ENCODE measurements at regions of chr7 and their contacts with region 1.

Region 1: DNA sequence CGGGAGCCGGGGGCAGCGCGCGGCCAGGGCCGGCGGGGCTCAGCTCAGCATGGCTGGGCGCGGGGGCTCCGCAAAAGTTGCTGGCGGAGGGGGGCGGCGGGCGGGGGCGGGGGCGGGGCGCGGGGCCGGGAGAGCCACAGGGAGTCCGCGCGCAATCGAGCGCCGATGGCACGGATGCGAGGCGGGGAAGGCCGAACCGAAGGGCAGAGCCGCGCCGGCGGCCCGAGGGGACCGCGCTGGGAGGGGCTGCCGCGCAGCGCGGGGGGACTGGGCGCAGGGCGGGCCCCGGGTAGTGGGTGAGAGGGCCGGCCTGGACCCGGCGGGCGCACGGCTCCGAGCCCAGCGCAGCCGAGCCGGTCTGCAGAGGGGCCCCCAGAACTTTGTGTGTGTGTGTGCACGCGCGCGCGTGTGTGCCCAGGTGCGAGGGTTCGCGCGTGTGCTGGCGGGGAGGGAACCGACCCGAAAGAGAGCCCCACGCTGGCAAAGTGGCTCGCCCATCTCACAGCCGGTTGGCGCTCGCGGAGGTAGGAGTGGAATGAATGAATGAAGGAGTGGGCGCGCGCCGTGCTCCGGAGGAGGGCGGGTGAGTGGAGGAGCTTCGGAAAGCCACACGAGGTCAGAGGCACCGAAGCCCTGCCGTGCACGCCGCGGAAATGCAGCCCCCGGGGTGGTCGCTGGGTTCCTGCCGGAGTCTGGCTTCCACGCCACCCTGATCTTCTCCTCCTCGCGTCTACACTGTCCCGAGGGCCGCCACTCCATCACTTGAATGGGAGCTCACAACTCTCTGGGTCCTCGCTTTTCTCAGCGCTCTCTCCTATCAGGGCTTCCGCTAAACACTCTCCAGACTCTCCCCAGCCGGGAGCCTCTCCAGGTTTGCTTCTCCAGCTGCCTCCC is at the start of gene HIPK2:
- DNase-seq: peak; percentile 63 to 81
- ATAC-seq: peak; percentile 68 to 80 (median 74)
- H3K4me3 ChIP-seq: peak within 1 kb of the TSS; percentile 78
- H3K4me3 Mint-ChIP-seq: peak within 1 kb of the TSS; percentile 98
- H3K27ac ChIP-seq: peak within 1 kb of the TSS; percentile 75
- H3K27ac Mint-ChIP-seq: peak within 1 kb of the TSS; percentile 95 to 99
- H3K4me1 ChIP-seq: peaks cover 21% of the 10 kb centered on the region
- H3K4me1 Mint-ChIP-seq: peaks cover 57 to 59% of the 10 kb centered on the region in 2 donors
- H3K27me3 ChIP-seq: peaks cover 4% of the 10 kb centered on the region
- H3K27me3 Mint-ChIP-seq: no peaks in the 10 kb centered on the region
- CTCF ChIP-seq: no peak
- total RNA-seq, gene HIPK2: 127 to 145 (median 144) TPM

Region 2: GRCh38 chr7:139823959-139824521 is 45.8 kb after region 1 on chr7:
- intact Hi-C with region 1: loop called (anchors 1 kb)
- DNase-seq: no peak
- ATAC-seq: no peak
- H3K4me3 ChIP-seq: no peak overlapping the region
- H3K4me3 Mint-ChIP-seq: no peak overlapping the region
- H3K27ac ChIP-seq: no peak overlapping the region
- H3K27ac Mint-ChIP-seq: no peak overlapping the region
- H3K4me1 ChIP-seq: peaks cover 30% of the 10 kb centered on the region
- H3K4me1 Mint-ChIP-seq: peaks cover 11 to 22% of the 10 kb centered on the region in 2 donors
- H3K27me3 ChIP-seq: no peaks in the 10 kb centered on the region
- H3K27me3 Mint-ChIP-seq: no peaks in the 10 kb centered on the region
- CTCF ChIP-seq: no peak

Region 3: DNA sequence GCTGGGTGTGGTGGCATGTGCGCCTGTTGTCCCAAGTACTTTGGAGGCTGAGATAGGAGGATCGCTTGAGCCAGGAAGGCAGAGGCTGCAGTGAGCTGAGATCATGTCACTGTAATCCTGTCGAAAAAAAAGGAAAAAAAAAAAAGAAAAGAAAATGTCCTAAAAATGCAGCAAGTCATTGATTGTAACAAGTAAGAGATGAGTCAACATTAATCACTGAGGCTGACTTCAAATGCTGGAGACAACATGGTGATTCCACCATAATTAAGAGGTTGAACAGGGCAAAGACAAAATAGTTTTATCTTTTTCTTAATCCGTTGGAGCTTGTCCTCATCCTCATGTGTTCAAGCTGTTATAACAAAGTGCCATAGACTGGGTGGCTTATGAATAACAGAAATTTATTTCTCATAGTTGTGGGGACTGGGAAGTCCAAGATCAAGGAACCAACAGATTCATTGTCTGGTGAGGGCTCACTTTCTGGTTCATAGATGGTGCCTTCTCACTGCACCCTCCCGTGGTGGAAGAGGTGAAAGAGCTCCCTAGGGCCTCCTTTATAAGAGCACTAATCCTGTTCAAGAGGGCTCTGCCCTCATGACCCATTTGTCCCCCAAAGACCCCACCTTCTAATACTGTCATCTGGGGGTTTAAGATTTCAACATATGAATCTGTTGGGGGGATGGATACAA is 111.1 kb after region 1 on chr7:
- intact Hi-C with region 1: loop called (anchors 5 kb)
- DNase-seq: no peak
- ATAC-seq: no peak
- H3K4me3 ChIP-seq: no peak overlapping the region
- H3K4me3 Mint-ChIP-seq: no peak overlapping the region
- H3K27ac ChIP-seq: no peak overlapping the region
- H3K27ac Mint-ChIP-seq: peak overlapping the region; percentile 92 to 94
- H3K4me1 ChIP-seq: peaks cover 22% of the 10 kb centered on the region
- H3K4me1 Mint-ChIP-seq: peaks cover 57 to 60% of the 10 kb centered on the region in 2 donors
- H3K27me3 ChIP-seq: no peaks in the 10 kb centered on the region
- H3K27me3 Mint-ChIP-seq: no peaks in the 10 kb centered on the region
- CTCF ChIP-seq: no peak

Region 4: GRCh38 chr7:139981511-139981895 is 203.3 kb after region 1 on chr7:
- intact Hi-C with region 1: loop called (anchors 2 kb)
- DNase-seq: no peak
- ATAC-seq: no peak
- H3K4me3 ChIP-seq: no peak overlapping the region
- H3K4me3 Mint-ChIP-seq: peak overlapping the region; percentile 25
- H3K27ac ChIP-seq: no peak overlapping the region
- H3K27ac Mint-ChIP-seq: peak overlapping the region; percentile 89 to 92
- H3K4me1 ChIP-seq: peaks cover 15% of the 10 kb centered on the region
- H3K4me1 Mint-ChIP-seq: peaks cover 13 to 14% of the 10 kb centered on the region in 2 donors
- H3K27me3 ChIP-seq: no peaks in the 10 kb centered on the region
- H3K27me3 Mint-ChIP-seq: no peaks in the 10 kb centered on the region
- CTCF ChIP-seq: no peak

Region 5: DNA sequence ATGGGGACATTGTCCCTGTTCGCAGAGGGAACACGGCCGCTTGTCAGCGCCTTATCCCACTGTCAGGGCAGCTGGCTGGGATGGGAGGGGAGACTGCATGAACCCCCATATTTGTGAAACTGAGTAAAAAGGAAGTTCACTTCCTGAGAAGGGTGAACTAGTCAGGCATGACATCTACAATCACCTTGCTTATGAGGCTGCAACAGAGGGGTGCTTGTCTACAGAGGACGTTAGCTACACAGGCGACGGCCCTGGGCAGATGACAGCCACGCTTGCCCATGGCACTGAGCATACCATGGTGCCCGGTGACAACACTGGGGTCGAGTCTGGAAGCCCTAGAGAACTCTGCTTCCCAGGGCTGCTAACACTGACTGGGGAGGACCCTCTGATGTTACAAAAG is 444.6 kb after region 1 on chr7:
- intact Hi-C with region 1: no loop called
- DNase-seq: no peak
- ATAC-seq: no peak
- H3K4me3 ChIP-seq: no peak overlapping the region
- H3K4me3 Mint-ChIP-seq: no peak overlapping the region
- H3K27ac ChIP-seq: no peak overlapping the region
- H3K27ac Mint-ChIP-seq: no peak overlapping the region
- H3K4me1 ChIP-seq: peaks cover 18% of the 10 kb centered on the region
- H3K4me1 Mint-ChIP-seq: peaks cover 16 to 20% of the 10 kb centered on the region in 2 donors
- H3K27me3 ChIP-seq: no peaks in the 10 kb centered on the region
- H3K27me3 Mint-ChIP-seq: no peaks in the 10 kb centered on the region
- CTCF ChIP-seq: no peak